Heart left ventricle (tissue), 16 donors: ENCODE measurements at regions of chr2 and their contacts with region 1.

Region 1: DNA sequence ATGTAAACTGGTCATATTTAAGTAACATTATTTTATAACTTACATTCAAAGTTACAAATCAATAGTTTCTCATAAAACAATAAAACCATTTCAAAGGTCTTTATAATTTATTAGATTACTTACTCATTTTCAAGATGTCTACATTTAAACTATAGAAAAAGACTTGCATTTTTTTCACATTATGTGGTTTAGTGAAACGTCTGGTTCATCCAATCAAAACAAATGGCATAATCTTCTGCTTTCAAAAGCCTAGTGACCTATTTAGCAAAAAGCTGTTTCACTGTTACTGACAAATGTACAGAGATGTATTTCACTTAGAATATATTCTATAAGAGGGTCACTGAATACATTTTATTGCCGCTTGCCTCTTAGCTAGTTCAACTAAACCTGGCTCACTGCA is 49.3 kb upstream of the MCM6 start:
- DNase-seq: no peak
- ATAC-seq: no peak
- H3K4me3 ChIP-seq: no peak overlapping the region
- H3K27ac ChIP-seq: no peak overlapping the region
- H3K4me1 ChIP-seq: no peaks in the 10 kb centered on the region
- H3K27me3 ChIP-seq: no peaks in the 10 kb centered on the region
- CTCF ChIP-seq: no peak
- POLR2A ChIP-seq: no peak

Region 2: DNA sequence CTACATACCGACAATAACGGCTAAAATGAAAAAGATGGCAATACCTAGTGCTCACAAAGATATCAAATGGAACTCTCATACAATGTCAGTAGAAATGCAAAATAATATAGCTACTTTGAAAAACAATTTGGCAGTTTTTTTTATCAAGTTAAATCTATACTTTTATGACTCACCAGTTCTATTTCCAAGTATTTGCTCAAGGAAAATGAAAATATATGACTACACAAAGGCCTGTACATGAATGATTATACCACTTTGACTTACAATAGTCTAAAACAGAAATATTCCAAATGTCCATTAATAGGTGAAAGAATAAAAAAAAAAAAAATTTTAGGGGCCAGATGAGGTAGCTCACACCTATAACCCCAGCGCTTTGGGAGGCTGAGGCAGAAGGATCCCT is 614.3 kb before region 1 on chr2:
- intact Hi-C with region 1: no loop called
- DNase-seq: no peak
- ATAC-seq: no peak
- H3K4me3 ChIP-seq: no peak overlapping the region
- H3K27ac ChIP-seq: no peak overlapping the region
- H3K4me1 ChIP-seq: no peaks in the 10 kb centered on the region
- H3K27me3 ChIP-seq: no peaks in the 10 kb centered on the region
- CTCF ChIP-seq: no peak
- POLR2A ChIP-seq: no peak

Region 3: GRCh38 chr2:136129601-136130000 is 204.0 kb after region 1 on chr2:
- intact Hi-C with region 1: loop called in 1 of 10 experiments (anchors 10 kb)
- DNase-seq: no peak
- ATAC-seq: no peak
- H3K4me3 ChIP-seq: no peak overlapping the region
- H3K27ac ChIP-seq: peak overlapping the region in 2 of 12 donors; percentile 22 to 74
- H3K4me1 ChIP-seq: peaks cover 0 to 53% (median 4%) of the 10 kb centered on the region in 12 donors
- H3K27me3 ChIP-seq: peaks cover 0 to 6% (median 0%) of the 10 kb centered on the region in 9 donors
- CTCF ChIP-seq: no peak
- POLR2A ChIP-seq: no peak